Activated T-helper 1 cell treated with anti-CD3 and anti-CD28 coated beads, Interleukin-12 subunit alpha, Interleukin-12 subunit beta, Interleukin-2, Interleukin-4 antibody, amounts not matched to agents 30 ng/mL and 10 ng/mL and 1 ng/mL, durations not matched to agents 14 hours and 24 hours and 36 hours (primary cell): ENCODE measurements at regions of chr4 and their contacts with region 1.

Region 1: GRCh38 chr4:146522098-146522868 is 543 bp upstream of the SLC10A7 start:
- DNase-seq: peak; percentile 79
- H3K4me3 Mint-ChIP-seq: no peak overlapping the region
- H3K27ac Mint-ChIP-seq: no peak overlapping the region
- H3K4me1 Mint-ChIP-seq: peaks cover 31% of the 10 kb centered on the region
- H3K27me3 Mint-ChIP-seq: no peaks in the 10 kb centered on the region

Region 2: DNA sequence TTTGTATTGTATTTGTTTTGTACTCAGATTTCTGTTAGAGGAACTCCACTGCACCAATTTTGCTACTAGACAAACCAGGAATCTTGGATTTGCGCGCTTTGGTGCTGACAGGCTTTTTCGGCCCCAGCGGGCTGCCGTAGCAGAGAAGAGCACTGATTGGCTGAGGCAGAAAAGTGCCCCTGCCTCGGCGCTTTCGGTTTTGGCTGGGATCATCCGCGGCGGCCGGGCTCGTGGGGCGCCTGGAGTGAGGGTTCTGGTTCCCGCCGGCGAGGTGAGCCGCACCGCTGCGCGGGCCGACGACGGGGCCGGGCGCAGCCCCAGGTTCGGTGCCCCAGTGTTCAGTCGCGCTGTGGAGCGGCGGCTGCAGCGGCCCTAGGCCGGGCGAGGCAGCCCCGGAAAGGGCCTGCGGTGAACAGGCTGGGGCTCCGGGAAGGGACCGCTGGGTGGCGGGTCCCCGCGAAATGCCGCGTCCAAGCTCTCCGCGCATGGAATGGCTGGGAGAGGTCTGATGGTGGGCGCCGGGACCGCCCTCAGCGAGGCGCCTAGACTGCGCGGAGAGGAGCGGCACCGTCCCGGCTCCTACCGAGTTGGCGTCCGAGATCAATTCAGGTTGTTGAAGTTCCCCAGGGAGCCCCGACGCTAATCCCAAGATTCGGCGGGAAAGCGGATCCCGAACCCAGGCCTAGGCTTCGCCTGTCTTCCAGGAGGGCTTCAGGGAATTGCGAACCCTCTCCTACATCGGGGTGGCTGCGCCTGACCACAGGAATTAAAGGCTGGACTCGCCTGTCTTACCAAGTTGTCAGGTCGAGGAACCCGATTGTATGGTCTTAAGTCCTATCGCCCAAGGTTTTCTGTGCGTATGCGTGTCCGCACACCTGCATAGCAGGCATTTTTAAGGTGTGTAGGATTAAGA is 346.5 kb before region 1 on chr4 and contains the start of gene LSM6:
- intact Hi-C with region 1: loop called (anchors 5 kb)
- DNase-seq: peak; percentile 77
- H3K4me3 Mint-ChIP-seq: peak within 1 kb of the TSS; percentile 88
- H3K27ac Mint-ChIP-seq: peak within 1 kb of the TSS; percentile 81
- H3K4me1 Mint-ChIP-seq: peaks cover 40% of the 10 kb centered on the region
- H3K27me3 Mint-ChIP-seq: no peaks in the 10 kb centered on the region
- total RNA-seq, gene LSM6: 62.9 and 65.0 TPM in 2 replicates

Region 3: DNA sequence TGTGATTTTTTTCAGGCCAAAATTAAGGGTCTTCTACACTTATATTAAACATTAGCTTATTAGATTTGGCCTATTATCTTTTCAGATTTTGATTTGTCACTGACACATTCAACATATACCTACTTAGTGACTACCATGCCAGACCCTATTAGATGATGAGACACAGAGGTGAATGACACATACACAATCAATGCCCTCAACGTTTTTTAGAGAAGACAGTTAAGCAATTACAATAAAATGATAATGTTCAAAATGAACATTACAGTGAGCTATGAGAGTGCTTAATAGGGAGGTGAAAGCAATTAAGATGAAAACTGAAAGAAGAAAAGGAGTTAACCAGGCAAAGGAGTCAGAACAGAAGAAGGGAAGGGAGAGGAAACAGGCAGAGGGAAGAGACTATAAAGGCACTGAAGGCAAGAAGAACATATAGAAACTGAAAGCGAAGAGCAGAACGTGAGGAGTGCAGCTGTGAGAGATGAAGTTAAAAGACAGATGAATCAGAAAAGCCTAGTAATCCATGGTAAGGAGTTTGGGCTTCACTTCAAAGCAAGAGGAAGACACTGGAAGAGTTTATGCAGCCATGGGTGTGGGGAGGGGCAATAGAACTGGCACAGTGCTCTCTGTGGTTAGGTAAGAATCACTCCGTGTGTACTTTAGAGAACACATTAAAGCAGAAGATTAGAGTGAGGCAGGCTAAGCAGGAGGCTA is 188.9 kb before region 1 on chr4:
- intact Hi-C with region 1: loop called (anchors 2 kb)
- DNase-seq: peak; percentile 1
- H3K4me3 Mint-ChIP-seq: no peak overlapping the region
- H3K27ac Mint-ChIP-seq: no peak overlapping the region
- H3K4me1 Mint-ChIP-seq: no peaks in the 10 kb centered on the region
- H3K27me3 Mint-ChIP-seq: no peaks in the 10 kb centered on the region

Region 4: DNA sequence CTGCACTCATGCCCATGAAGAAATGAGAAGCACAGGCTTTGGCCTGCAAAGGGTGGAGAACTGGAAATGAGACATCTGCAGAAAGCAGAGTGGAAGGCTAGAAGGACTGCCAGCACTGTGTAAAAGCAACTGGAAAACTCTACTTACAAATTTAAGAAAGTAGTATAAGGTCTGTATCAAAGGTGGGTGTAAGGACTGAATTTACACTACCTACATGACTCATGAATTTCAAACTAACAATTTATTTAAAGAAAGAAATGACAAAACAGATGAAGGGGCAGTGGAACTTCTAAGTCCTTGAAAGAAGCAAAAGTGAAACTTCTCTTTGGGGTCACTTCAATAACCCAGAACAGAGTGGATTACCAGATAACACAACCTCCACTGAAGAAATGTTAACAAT is 71.8 kb before region 1 on chr4:
- intact Hi-C with region 1: loop called (anchors 1 kb)
- DNase-seq: no peak
- H3K4me3 Mint-ChIP-seq: peak overlapping the region; percentile 38
- H3K27ac Mint-ChIP-seq: peak overlapping the region; percentile 68
- H3K4me1 Mint-ChIP-seq: peaks cover 40% of the 10 kb centered on the region
- H3K27me3 Mint-ChIP-seq: no peaks in the 10 kb centered on the region

Region 5: DNA sequence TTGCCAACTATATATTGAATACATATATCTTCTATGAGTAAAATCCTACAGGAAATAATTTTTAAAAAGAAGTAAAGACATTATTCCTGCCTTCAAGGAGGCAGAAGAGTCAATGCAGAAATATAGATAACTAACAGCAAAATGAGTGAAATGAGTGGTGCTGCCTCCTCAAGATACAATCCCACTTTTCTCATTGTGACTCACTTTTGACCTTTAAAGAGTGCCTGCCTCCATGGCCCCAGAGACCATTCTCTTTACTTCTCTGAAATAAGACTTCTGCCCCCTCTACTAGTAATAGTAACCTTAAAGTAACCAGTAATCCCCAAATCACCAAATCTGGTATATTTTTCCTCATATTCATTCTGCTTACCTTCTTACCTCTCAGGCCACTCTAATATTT is 16.0 kb before region 1 on chr4:
- intact Hi-C with region 1: loop called (anchors 1 kb)
- DNase-seq: no peak
- H3K4me3 Mint-ChIP-seq: no peak overlapping the region
- H3K27ac Mint-ChIP-seq: no peak overlapping the region
- H3K4me1 Mint-ChIP-seq: peaks cover 16% of the 10 kb centered on the region
- H3K27me3 Mint-ChIP-seq: no peaks in the 10 kb centered on the region

Region 6: DNA sequence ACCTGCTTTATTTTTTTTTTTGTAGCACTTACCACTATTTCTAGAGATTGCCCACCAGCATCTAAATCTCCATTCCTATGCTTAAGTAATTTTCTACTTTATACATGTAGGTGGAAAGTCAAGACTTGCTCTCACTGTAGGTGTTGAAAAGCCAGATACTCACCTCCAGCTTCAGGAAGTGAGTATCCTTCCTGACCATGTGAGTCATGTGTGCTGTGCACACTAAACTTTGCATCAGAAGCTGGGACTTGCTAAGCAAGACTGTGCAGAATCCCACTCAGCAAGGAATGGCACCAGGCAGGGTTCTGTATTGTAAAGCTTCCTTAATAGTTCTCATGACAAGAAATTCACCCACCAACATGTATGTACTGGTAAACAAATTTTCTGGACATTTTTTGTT is 268.2 kb after region 1 on chr4:
- intact Hi-C with region 1: no loop called
- DNase-seq: no peak
- H3K4me3 Mint-ChIP-seq: no peak overlapping the region
- H3K27ac Mint-ChIP-seq: no peak overlapping the region
- H3K4me1 Mint-ChIP-seq: no peaks in the 10 kb centered on the region
- H3K27me3 Mint-ChIP-seq: peaks cover 3% of the 10 kb centered on the region

Region 7: GRCh38 chr4:146945556-146946374 is 423.5 kb after region 1 on chr4 and contains the start of gene TTC29:
- intact Hi-C with region 1: loop called (anchors 10 kb)
- DNase-seq: peak; percentile 79
- H3K4me3 Mint-ChIP-seq: peak within 1 kb of the TSS; percentile 55
- H3K27ac Mint-ChIP-seq: no peak within 1 kb of the TSS
- H3K4me1 Mint-ChIP-seq: peaks cover 22% of the 10 kb centered on the region
- H3K27me3 Mint-ChIP-seq: peaks cover 31% of the 10 kb centered on the region
- total RNA-seq, gene TTC29: not detected in 2 replicates

Region 8: DNA sequence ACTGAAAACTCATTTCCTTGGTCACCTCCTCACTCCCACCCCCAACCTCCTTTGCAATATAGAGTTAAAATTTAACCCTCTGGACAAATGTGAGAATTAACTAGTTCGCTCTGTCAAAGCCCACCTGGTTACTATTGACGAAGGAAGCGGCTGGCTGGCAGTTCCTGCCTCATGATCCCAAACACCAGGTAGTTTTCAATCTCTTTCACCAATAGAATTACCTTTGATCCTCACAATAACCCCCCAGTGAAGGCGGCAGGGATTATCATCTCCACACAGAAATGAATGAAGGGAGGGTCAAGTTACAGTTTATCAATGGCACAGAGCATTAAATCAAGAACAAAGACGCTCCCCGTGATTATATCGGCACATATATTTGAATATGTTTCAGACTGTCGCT is 489.1 kb after region 1 on chr4:
- intact Hi-C with region 1: no loop called
- DNase-seq: no peak
- H3K4me3 Mint-ChIP-seq: no peak overlapping the region
- H3K27ac Mint-ChIP-seq: no peak overlapping the region
- H3K4me1 Mint-ChIP-seq: no peaks in the 10 kb centered on the region
- H3K27me3 Mint-ChIP-seq: peaks cover 8% of the 10 kb centered on the region

Region 9: GRCh38 chr4:147088146-147088545 is 565.9 kb after region 1 on chr4:
- intact Hi-C with region 1: no loop called
- DNase-seq: no peak
- H3K4me3 Mint-ChIP-seq: no peak overlapping the region
- H3K27ac Mint-ChIP-seq: no peak overlapping the region
- H3K4me1 Mint-ChIP-seq: no peaks in the 10 kb centered on the region
- H3K27me3 Mint-ChIP-seq: peaks cover 2% of the 10 kb centered on the region